Lower leg skin (tissue), 4 donors: ENCODE measurements at regions of chr7 and their contacts with region 1.

Region 1: DNA sequence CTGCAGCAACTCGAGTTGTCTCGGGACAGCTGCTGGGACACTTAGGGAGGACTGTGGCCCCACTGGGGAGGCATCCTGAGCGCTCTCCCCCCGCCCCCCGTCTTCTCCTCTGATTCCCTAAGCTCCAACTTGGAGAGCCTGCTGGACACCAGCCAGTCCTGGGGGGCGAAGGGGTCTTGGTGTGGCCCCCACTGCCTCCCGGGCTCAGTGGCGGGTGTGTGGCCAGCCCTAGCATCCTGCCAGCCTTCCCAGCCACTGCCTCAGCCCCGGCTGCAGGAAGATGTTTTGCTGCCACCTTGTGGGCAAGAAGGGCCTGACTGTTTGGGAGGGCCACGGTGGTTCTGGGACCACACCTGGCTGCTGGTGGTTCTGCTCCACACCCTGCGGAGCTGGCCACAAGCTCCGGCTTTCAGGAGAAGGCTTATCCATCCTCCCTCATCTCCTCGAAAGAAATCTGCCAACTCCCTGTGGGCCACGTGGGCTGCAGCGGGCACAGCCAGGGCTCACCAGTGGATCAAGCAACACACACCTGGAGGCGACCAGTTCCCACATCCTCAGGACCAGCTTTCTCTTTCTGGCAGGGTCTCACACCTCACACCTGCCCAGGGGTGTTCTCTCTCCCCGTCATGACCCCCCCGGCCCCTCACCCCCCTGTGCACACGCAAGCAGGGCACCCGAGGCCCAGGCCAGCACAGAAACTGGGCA is 24.8 kb downstream of the AGAP3 start:
- DNase-seq: peak; percentile 76 to 96
- H3K4me3 ChIP-seq: no peak overlapping the region
- CTCF ChIP-seq: peak in 1 of 3 donors; percentile 33
- POLR2A ChIP-seq: no peak

Region 2: DNA sequence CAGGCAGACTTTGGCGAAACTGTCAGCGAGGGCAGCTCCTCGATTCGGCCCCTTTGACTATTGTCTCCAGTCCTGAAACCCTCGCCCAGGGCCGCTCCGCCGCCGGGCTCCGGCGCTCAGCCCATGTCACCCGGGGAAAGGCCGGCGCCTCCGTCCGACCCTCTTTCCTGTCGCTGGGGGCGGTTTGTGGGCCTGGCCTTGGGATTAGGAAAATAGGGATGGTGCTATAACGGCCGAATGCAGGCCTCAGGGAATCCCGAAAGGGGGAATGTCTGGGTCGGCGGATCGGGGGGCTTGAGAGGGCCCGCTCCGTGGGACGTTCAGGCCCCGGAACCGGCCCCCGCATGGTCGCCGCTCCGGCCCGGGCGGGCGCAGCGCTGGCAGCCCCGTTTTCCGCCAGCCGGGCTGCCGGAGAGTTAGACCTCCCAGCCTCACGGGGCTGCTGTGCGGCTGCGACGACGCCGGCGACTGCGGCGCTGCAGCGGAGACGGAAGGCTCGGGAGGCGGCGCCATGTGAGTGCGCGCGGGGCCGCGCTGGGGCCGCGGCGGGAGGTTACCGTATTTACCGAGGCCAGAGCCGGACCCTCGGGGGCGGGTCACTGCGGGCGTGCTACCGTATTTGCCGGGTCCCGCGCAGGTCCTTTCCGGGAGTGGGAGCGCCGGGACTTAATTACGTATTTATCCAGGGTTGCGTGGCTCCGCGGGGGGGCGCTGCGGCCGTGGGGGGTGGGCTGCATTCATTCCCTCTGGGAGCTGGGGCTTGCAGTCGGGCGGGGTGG is 706.1 kb before region 1 on chr7:
- intact Hi-C with region 1: no loop called
- DNase-seq: peak; percentile 85 to 98
- H3K4me3 ChIP-seq: peak overlapping the region; percentile 52
- CTCF ChIP-seq: no peak
- POLR2A ChIP-seq: no peak

Region 3: DNA sequence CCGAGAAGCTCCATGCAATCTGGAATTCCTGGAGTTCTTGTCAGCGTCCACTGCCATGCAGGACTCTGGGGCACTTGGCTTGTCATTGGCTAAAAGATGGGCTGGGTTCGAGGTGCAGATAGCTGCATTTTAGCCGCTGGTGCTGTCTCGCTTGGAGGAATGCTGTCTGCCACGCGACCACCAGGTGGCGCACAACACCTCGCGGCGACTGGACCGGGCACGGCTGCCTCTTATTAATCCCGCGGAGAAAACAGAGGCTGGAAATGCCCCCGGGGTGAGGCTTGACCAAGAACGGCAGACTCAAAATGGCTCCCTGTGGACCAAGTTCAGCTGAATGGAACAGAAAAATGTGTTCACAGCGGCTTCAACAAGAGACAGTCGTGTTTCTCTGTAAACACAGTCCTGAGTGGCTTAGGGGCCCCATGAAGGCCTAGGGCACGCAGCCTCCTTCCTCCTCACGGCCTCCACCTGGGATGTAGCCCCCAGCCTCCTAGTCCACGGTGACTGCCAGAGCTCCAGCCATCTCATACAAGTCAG is 212.6 kb before region 1 on chr7:
- intact Hi-C with region 1: loop called (anchors 10 kb)
- DNase-seq: peak; percentile 59 to 96
- H3K4me3 ChIP-seq: no peak overlapping the region
- CTCF ChIP-seq: peak in 1 of 3 donors; percentile 68
- POLR2A ChIP-seq: no peak

Region 4: DNA sequence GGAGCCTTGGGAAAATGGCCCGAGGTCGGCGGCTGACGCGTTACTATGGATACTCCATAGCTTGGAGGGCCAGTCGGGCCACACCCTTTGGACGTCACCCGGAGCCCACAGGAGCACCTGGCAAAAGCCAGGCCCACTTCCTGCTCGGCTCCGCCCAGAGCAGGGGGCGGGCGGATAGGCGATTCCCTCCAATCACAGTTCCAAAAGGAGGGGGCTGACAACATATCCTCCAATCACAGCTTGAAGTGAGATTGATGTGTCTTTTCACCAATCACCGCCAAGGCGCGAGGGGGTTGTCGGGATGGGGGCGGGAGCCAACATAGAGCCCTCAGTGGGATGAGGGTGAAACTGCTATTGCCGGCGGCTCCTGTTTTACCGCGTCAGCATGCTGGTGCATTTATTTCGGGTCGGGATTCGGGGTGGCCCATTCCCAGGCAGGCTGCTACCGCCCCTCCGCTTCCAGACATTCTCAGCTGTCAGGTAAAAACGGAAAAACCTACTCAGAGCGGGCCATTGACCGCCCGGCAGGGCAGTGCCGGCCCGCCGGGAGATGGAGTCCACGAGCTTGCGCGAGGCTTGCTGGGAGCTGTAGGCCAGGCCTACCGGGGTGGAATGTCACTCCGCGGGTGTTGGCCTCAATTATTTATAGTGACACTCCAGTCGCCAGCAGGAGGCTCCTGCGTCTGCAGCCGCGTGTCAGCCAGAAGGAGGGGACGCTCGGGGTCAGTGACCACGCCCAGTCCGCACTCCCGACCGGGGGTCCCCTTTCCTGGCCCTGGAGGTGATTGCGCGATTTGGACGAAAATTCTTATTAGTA is 82.8 kb before region 1 on chr7 and contains the start of gene ABCB8:
- intact Hi-C with region 1: loop called (anchors 5 kb)
- DNase-seq: peak; percentile 100
- H3K4me3 ChIP-seq: peak within 1 kb of the TSS; percentile 51
- CTCF ChIP-seq: peak in 1 of 3 donors; percentile 10
- POLR2A ChIP-seq: no peak
- total RNA-seq, gene ABCB8: 22.9 to 35.2 (median 27.6) TPM